CD14-positive monocyte (primary cell): ENCODE measurements at regions of chr1 and their contacts with region 1.

Region 1: DNA sequence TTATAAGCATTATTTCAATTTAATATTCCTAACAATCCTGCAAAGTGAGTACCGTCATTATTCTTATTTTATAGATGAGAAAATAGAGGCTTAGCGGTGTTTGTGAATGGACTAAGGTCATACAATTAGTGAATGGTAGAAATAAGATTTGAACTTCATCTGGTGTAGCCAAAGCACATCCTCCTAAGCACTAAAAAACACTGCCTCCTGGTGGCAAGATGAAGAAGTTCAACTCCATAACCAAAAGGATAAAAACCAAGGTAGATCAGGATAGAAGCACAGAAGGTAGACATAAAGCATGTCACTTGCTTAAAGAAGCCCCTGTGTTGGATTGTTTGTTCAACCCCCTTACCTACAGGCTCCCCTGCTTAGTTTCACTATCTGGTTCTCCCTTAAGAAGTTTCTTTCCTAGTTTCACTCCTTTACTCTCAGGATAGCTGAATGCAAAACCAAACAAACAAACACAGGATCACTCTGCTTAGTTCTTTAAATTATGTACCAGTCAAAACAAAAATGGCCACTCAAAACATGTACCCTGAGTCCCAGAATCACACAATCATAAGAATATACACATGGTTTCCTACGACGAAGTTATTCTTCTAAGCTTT is 12.7 kb upstream of the AIM2 start:
- DNase-seq: no peak
- H3K4me3 ChIP-seq: peak overlapping the region in 1 of 3 experiments; percentile 11
- H3K4me3 Mint-ChIP-seq: no peak overlapping the region
- H3K27ac ChIP-seq: peak overlapping the region in 1 of 2 donors; percentile 86
- H3K27ac Mint-ChIP-seq: peak overlapping the region in 6 of 7 donors; percentile 80 to 98 (median 96)
- H3K4me1 ChIP-seq: peaks cover 86 to 92% of the 10 kb centered on the region in 2 donors
- H3K4me1 Mint-ChIP-seq: peaks cover 58% of the 10 kb centered on the region
- H3K27me3 ChIP-seq: no peaks in the 10 kb centered on the region
- H3K27me3 Mint-ChIP-seq: peaks cover 0 to 2% (median 1%) of the 10 kb centered on the region in 3 donors
- CTCF ChIP-seq: peak; percentile 70

Region 2: DNA sequence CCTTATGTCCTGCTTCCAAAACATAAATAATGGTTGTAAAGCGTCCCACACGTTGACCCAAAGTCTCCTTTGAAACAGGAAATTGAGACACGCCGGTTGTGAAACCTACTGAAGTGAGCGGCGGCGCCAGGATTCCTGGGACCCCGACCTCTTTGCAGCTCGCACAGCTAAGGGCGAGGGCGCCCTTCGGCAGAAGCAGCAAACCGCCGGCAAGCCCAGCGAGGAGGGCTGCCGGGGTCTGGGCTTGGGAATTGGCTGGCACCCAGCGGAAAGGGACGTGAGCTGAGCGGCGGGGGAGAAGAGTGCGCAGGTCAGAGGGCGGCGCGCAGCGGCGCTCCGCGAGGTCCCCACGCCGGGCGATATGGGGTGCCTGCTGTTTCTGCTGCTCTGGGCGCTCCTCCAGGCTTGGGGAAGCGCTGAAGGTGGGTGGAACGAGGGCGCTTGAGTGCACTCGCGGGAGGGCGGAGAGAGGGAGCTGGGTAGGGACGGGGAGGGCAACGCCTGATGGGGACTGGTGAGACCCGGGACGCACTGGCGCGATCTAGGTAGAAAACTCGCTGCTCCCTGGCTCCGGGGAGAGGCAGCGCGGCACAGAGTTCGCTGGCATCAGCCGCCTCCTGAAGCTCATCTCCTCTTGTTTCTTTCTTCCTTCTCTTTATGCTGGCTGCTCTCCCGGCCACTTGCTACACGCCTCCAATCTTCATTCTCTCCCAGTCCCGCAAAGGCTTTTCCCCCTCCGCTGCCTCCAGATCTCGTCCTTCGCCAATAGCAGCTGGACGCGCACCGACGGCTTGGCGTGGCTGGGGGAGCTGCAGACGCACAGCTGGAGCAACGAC is 908.3 kb before region 1 on chr1 and contains the start of gene CD1D:
- intact Hi-C with region 1: loop called in 1 of 2 experiments (anchors 10 kb)
- DNase-seq: peak; percentile 47 to 76 (median 56)
- H3K4me3 ChIP-seq: peak within 1 kb of the TSS; percentile 89 to 96 (median 92)
- H3K4me3 Mint-ChIP-seq: peak within 1 kb of the TSS; percentile 96 to 99
- H3K27ac ChIP-seq: peak within 1 kb of the TSS; percentile 91 to 92
- H3K27ac Mint-ChIP-seq: peak within 1 kb of the TSS; percentile 82 to 98 (median 96)
- H3K4me1 ChIP-seq: peaks cover 82 to 87% of the 10 kb centered on the region in 2 donors
- H3K4me1 Mint-ChIP-seq: peaks cover 90% of the 10 kb centered on the region
- H3K27me3 ChIP-seq: no peaks in the 10 kb centered on the region
- H3K27me3 Mint-ChIP-seq: peaks cover 0 to 3% (median 0%) of the 10 kb centered on the region in 3 donors
- CTCF ChIP-seq: no peak
- polyA plus RNA-seq, gene CD1D: 121 to 144 (median 134) TPM

Region 3: GRCh38 chr1:159077120-159077961 is 11.9 kb before region 1 on chr1:
- intact Hi-C with region 1: loop called in 1 of 2 experiments (anchors 2 kb)
- DNase-seq: peak; percentile 62 to 86 (median 83)
- H3K4me3 ChIP-seq: peak overlapping the region in 2 of 3 experiments; percentile 22 to 63
- H3K4me3 Mint-ChIP-seq: peak overlapping the region; percentile 68 to 86
- H3K27ac ChIP-seq: peak overlapping the region; percentile 96 to 97
- H3K27ac Mint-ChIP-seq: peak overlapping the region; percentile 97 to 100 (median 99)
- H3K4me1 ChIP-seq: peaks cover 34 to 46% of the 10 kb centered on the region in 2 donors
- H3K4me1 Mint-ChIP-seq: peaks cover 62% of the 10 kb centered on the region
- H3K27me3 ChIP-seq: no peaks in the 10 kb centered on the region
- H3K27me3 Mint-ChIP-seq: no peaks in the 10 kb centered on the region
- CTCF ChIP-seq: no peak